Left ventricle myocardium superior (tissue), 1 donor: ENCODE measurements at regions of chr3 and their contacts with region 1.

Region 1: DNA sequence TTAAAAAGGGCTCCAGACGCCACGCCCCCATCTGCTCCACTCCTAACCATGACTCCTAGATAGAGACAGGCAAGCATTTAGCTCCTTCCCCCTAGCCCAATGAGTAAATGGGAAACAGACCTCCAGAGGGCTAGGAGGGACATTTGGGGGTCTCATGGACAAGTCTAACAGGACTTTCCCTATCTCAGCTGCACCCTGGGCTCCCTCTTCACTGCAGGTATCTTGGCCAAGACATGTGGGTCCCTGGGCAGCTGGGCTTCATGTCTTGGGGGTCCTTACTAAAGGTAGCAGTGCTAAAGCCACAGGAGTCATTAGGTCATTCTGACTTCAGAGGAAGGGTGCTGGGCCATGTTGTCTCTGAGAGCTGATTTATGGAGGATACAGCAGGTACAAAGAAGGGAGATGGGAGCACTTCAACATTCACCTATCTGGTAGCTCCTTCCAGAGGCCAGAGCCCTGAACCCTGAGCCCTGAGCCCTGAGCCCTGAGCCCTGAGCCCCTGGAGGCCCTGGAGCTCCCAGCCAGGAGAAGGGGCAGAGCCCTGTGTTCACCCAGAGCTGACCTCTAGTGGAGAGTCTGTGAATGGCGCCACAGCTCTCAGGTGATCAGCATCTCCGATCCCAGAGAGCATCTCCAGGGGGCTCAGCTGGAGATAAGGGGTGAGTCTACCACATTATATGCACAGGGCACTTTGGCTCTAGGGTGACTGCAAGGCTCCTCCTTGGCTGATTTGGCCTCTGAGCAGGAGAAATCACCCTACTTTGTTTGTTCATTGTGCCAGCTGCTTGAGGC is 40.1 kb upstream of the EPHB1 start:
- DNase-seq: peak; percentile 59
- ATAC-seq: peak; percentile 52

Region 2: DNA sequence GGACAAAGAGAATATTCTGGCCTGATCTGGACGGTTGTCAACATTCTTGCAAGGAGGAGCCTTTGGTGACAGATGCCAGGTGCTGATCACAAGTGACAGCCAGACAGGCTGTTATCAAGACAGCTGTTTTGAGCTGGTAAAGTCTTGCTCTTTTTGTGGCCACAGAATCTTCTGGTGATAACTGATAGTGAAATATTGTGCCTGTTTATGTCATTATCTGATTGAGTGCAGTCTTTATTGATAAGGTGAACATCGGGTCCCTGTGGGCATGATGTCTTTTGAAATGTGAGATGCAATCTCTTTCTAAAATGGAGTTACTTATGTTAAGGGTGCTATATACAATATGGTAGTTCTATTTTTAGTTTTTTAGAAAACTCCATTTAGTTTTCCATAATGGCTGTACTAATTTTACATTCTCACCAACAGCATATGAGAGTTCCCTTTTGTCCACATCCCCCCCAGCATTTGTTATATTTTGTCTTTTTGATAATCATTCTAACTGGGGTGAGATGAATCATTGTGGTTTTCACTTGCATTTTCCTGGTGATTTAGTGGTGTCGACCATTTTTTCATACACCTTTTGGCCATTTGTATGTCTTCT is 258.4 kb before region 1 on chr3:
- intact Hi-C with region 1: no loop called
- DNase-seq: no peak
- ATAC-seq: peak; percentile 28

Region 3: GRCh38 chr3:134663721-134664456 is 91.1 kb before region 1 on chr3:
- intact Hi-C with region 1: loop called (anchors 10 kb)
- DNase-seq: no peak
- ATAC-seq: peak; percentile 24